ENCODE measurements at regions of chr4 and their contacts with region 1.

Region 1: GRCh38 chr4:72326692-72327632 is 242.1 kb downstream of the ADAMTS3 start:
- DNase-seq: peak; percentile 10 to 45 (median 44)
- H3K4me3 ChIP-seq: no peak overlapping the region
- H3K27ac ChIP-seq: no peak overlapping the region
- H3K4me1 ChIP-seq: no peaks in the 10 kb centered on the region
- H3K27me3 ChIP-seq: peaks cover 0 to 17% (median 6%) of the 10 kb centered on the region in 5 experiments

Region 2: GRCh38 chr4:72275381-72275780 is 51.6 kb before region 1 on chr4:
- CTCF ChIA-PET with region 1: no interaction called
- POLR2A ChIA-PET with region 1: no interaction called
- DNase-seq: no peak
- H3K4me3 ChIP-seq: no peak overlapping the region
- H3K27ac ChIP-seq: no peak overlapping the region
- H3K4me1 ChIP-seq: no peaks in the 10 kb centered on the region
- H3K27me3 ChIP-seq: no peaks in the 10 kb centered on the region

Region 3: GRCh38 chr4:72312032-72312650 is 14.8 kb before region 1 on chr4:
- CTCF ChIA-PET with region 1: interaction called, 12 read pairs
- POLR2A ChIA-PET with region 1: no interaction called
- DNase-seq: peak in 2 of 3 donors; percentile 11 to 15
- H3K4me3 ChIP-seq: no peak overlapping the region
- H3K27ac ChIP-seq: no peak overlapping the region
- H3K4me1 ChIP-seq: no peaks in the 10 kb centered on the region
- H3K27me3 ChIP-seq: peaks cover 0 to 3% (median 0%) of the 10 kb centered on the region in 5 experiments

Region 4: GRCh38 chr4:72340803-72341431 is 14.0 kb after region 1 on chr4:
- CTCF ChIA-PET with region 1: interaction called, 11 read pairs
- POLR2A ChIA-PET with region 1: no interaction called
- DNase-seq: no peak
- H3K4me3 ChIP-seq: no peak overlapping the region
- H3K27ac ChIP-seq: no peak overlapping the region
- H3K4me1 ChIP-seq: no peaks in the 10 kb centered on the region
- H3K27me3 ChIP-seq: no peaks in the 10 kb centered on the region

Region 5: GRCh38 chr4:72564184-72564583 is 237.2 kb after region 1 on chr4:
- CTCF ChIA-PET with region 1: no interaction called
- POLR2A ChIA-PET with region 1: no interaction called
- DNase-seq: no peak
- H3K4me3 ChIP-seq: no peak overlapping the region
- H3K27ac ChIP-seq: no peak overlapping the region
- H3K4me1 ChIP-seq: peaks cover 7 to 28% (median 23%) of the 10 kb centered on the region in 4 experiments
- H3K27me3 ChIP-seq: no peaks in the 10 kb centered on the region